ENCODE measurements at regions of chr10 and their contacts with region 1.

Region 1: GRCh38 chr10:15824498-15824897 is 35.8 kb downstream of the MINDY3 start:
- DNase-seq: no peak
- ATAC-seq: no peak
- H3K4me3 ChIP-seq: no peak overlapping the region
- H3K27ac ChIP-seq: no peak overlapping the region
- H3K4me1 ChIP-seq: peaks cover 0 to 4% of the 10 kb centered on the region in 2 donors
- H3K27me3 ChIP-seq: no peaks in the 10 kb centered on the region

Region 2: DNA sequence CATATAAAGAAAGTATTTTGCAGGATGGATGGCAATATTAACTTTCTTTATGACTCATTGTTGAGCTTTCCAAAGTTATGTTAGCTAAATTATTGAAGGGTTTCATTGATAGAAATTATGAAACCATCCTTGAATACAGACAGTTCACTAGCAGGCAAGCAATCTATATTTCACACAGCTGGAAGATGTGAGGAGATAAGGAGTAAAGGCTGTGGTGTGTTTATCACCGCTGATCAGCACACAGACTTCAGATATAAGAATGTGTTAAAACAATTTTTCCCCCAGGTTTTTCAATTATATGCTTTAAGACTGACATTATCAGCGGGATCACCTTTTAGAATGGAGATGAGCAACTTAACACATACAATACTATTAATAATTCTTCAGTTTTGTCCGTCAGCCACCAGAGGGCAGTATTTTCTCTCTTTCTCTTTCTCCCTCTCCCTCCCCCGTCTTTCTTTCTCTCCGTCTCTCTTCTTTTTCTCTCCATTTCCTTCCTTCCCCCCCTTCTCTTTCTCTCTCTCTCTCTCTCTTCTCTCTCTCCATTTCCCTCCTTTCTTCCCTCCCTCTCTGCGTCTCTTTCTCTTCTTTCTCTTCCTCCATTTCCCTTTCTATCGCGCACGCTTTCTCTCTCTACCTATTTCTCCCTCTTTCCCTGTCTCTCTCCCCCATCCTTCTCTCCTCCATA is 390.5 kb before region 1 on chr10:
- intact Hi-C with region 1: loop called (anchors 2 to 5 kb)
- DNase-seq: no peak
- ATAC-seq: peak; percentile 68
- H3K4me3 ChIP-seq: peak overlapping the region; percentile 24 to 56
- H3K27ac ChIP-seq: peak overlapping the region in 1 of 2 donors; percentile 87
- H3K4me1 ChIP-seq: peaks cover 0 to 2% of the 10 kb centered on the region in 2 donors
- H3K27me3 ChIP-seq: no peaks in the 10 kb centered on the region

Region 3: GRCh38 chr10:15585303-15585715 is 239.2 kb before region 1 on chr10:
- intact Hi-C with region 1: loop called in 1 of 2 experiments (anchors 5 kb)
- DNase-seq: peak; percentile 67 to 86
- ATAC-seq: peak; percentile 89
- H3K4me3 ChIP-seq: no peak overlapping the region
- H3K27ac ChIP-seq: peak overlapping the region in 1 of 2 donors; percentile 43
- H3K4me1 ChIP-seq: peaks cover 2 to 3% of the 10 kb centered on the region in 2 donors
- H3K27me3 ChIP-seq: no peaks in the 10 kb centered on the region

Region 4: DNA sequence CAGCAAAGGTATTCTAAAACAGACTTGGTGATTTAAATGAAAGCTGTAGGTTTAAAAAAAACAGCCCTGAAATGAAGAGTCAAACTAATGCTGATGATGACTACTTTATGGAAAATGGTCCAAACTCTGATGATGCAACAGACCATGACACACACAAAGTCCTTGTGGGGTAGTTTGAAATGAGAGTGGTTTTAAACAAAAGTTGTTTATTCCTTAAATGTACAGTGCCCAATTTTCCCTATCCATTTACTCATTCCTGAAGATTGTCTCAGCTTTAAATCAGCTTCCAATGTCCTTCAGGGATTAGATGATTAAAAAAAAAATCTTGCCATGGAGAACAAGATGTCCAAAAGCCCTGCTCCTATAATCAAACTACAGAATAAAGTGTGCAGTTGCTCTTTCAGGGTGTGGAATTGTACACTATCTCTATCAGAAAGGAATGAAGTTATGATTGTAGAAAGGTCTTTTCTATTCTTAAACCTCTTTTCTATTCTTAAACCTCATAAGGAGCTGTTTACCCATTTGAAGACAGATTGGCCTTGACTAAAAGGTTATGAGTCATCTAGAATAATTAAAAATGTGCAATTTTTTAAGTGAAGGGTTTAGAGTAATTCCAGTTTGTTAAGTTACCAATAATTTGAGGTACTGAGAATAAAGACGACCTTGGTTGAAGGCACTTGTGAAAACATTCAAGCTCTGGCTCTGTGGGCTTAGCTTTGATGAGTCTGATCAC is 34.5 kb before region 1 on chr10:
- intact Hi-C with region 1: loop called in 1 of 2 experiments (anchors 5 kb)
- DNase-seq: no peak
- ATAC-seq: peak; percentile 36
- H3K4me3 ChIP-seq: no peak overlapping the region
- H3K27ac ChIP-seq: peak overlapping the region; percentile 55 to 96
- H3K4me1 ChIP-seq: peaks cover 6 to 10% of the 10 kb centered on the region in 2 donors
- H3K27me3 ChIP-seq: no peaks in the 10 kb centered on the region

Region 5: DNA sequence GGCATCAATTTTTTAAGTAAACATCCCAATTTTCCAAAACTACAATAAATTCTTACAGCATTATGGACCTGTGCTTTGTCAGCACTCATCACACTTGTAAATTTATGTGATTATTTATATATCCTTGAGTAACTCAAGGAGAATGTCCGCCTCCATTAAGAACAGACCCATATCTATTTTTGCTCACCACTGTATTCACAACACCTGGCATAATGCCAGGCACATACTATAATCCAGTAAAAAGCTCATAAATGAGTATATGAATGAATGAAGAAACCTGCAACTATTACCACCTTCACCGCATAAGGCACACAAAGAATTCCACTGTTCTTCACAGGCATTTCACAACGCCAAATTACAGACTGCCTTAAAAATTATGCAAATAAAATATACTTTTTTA is 11.1 kb before region 1 on chr10:
- intact Hi-C with region 1: no loop called
- DNase-seq: no peak
- ATAC-seq: no peak
- H3K4me3 ChIP-seq: no peak overlapping the region
- H3K27ac ChIP-seq: no peak overlapping the region
- H3K4me1 ChIP-seq: peaks cover 2 to 13% of the 10 kb centered on the region in 2 donors
- H3K27me3 ChIP-seq: no peaks in the 10 kb centered on the region

Region 6: GRCh38 chr10:15879058-15879457 is 54.6 kb after region 1 on chr10:
- intact Hi-C with region 1: no loop called
- DNase-seq: no peak
- ATAC-seq: no peak
- H3K4me3 ChIP-seq: no peak overlapping the region
- H3K27ac ChIP-seq: no peak overlapping the region
- H3K4me1 ChIP-seq: no peaks in the 10 kb centered on the region
- H3K27me3 ChIP-seq: peaks cover 0 to 1% of the 10 kb centered on the region in 2 donors

Region 7: DNA sequence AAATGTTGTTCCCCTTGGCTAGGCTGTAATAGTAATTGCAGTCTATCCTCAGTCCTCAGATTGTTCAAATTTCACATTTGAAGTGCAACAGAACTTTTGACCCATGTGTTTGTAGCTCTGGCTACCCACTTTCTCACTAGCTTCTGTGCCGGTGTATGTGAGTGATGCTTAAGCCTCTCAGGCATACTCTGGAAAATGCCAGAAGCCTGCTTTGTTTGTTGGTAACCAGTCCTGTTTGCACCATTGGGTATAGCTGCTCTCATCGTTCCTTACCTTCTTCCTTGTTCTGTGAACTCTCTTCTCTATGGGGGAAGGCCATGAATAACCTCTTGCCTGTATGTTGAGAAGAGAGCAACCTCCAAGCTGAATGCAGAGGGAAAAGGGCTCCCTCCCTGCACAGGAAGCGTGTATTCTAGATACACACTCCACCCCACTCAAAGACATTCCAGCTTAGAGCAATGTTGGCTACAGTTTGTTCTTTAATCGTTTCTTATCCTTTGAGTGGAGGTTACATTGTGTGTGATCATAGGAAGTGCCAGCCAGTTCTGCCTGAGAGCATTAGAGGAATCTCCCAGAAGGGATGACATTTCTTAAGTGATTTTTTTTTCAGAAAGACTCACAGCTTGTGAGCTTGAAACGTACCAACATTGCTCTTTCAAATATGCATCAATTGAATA is 656.7 kb after region 1 on chr10:
- intact Hi-C with region 1: no loop called
- DNase-seq: no peak
- ATAC-seq: no peak
- H3K4me3 ChIP-seq: no peak overlapping the region
- H3K27ac ChIP-seq: no peak overlapping the region
- H3K4me1 ChIP-seq: no peaks in the 10 kb centered on the region
- H3K27me3 ChIP-seq: no peaks in the 10 kb centered on the region